ENCODE measurements at regions of chr1 and their contacts with region 1.

Region 1: GRCh38 chr1:68213843-68214242 is 18.5 kb downstream of the WLS start:
- DNase-seq: peak; percentile 93
- H3K4me3 ChIP-seq: no peak overlapping the region
- H3K27ac ChIP-seq: peak overlapping the region; percentile 72 to 83 (median 75)
- H3K4me1 ChIP-seq: peaks cover 59 to 100% (median 98%) of the 10 kb centered on the region in 4 donors
- H3K27me3 ChIP-seq: no peaks in the 10 kb centered on the region
- CTCF ChIP-seq: no peak
- EP300 ChIP-seq: no peak
- POLR2A ChIP-seq: no peak

Region 2: DNA sequence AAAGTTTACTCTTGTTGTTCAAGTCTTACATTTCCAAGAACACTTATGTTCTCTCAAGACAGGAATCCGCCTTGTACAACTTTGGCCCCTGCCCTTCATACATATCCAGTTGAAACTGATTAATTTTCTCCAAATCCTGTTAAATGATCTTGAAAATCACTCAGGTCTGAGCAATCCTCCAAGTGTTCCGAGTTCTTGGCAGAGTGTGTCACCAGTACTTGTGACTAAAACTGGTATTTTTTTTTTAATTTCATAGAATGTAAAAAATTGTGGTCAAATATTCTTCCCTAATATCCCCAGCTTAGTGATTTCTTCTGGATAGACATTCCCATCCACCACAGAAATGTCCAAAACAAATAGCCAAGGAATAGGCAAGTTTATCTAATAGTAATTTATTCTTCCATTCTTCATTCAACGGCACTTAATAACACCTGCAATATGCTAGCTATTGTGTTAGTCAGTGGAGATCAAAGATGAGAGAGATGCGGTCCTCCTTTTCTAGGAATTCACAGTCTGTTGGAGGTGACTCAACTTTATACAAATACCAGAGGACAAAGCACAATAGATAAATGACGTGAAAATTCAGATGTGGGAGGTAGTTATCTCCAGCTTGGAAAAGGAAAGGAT is 234.8 kb before region 1 on chr1:
- intact Hi-C with region 1: no loop called
- DNase-seq: no peak
- H3K4me3 ChIP-seq: no peak overlapping the region
- H3K27ac ChIP-seq: no peak overlapping the region
- H3K4me1 ChIP-seq: peaks cover 0 to 11% (median 3%) of the 10 kb centered on the region in 4 donors
- H3K27me3 ChIP-seq: no peaks in the 10 kb centered on the region
- CTCF ChIP-seq: no peak
- EP300 ChIP-seq: no peak
- POLR2A ChIP-seq: no peak

Region 3: DNA sequence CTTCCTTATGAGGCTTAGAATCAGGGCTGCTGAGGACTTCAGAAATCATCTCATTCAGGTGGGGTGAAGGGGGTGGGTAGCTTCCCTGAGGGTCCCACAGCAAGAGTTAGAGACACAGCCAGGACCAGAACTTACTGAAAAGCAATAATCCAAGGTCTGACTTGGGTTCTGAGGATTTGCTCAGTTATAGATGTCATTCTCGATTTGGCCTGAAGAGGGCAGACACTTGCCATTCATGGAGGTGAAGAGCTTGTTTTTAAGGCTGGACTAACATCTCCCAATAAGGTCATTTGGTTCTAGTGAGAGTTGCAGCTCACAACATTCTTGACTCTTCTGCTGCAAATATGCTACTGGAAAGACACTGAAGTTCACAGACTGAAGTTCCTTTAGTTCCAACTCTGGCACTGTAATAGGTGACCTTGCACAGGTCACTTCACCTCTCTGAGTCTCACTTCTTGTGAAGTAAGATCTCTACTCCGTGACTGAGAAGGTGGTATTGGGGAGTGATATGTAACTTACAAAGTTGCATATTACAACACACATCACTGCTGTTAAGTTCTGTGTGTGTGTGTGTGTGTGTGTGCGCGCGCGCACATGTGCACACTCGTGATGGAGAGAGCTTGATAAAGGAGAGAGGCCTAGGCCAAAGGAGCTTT is 93.6 kb before region 1 on chr1:
- intact Hi-C with region 1: no loop called
- DNase-seq: peak; percentile 93
- H3K4me3 ChIP-seq: no peak overlapping the region
- H3K27ac ChIP-seq: peak overlapping the region; percentile 70 to 73 (median 72)
- H3K4me1 ChIP-seq: peaks cover 4 to 42% (median 31%) of the 10 kb centered on the region in 4 donors
- H3K27me3 ChIP-seq: no peaks in the 10 kb centered on the region
- CTCF ChIP-seq: peak; percentile 82 to 84 (median 83)
- EP300 ChIP-seq: no peak
- POLR2A ChIP-seq: no peak

Region 4: GRCh38 chr1:68173911-68174737 is 39.7 kb before region 1 on chr1:
- intact Hi-C with region 1: loop called (anchors 5 kb)
- DNase-seq: no peak
- H3K4me3 ChIP-seq: peak overlapping the region; percentile 21 to 39 (median 27)
- H3K27ac ChIP-seq: peak overlapping the region; percentile 75 to 82 (median 78)
- H3K4me1 ChIP-seq: peaks cover 57 to 85% (median 81%) of the 10 kb centered on the region in 4 donors
- H3K27me3 ChIP-seq: no peaks in the 10 kb centered on the region
- CTCF ChIP-seq: no peak
- EP300 ChIP-seq: no peak
- POLR2A ChIP-seq: no peak

Region 5: DNA sequence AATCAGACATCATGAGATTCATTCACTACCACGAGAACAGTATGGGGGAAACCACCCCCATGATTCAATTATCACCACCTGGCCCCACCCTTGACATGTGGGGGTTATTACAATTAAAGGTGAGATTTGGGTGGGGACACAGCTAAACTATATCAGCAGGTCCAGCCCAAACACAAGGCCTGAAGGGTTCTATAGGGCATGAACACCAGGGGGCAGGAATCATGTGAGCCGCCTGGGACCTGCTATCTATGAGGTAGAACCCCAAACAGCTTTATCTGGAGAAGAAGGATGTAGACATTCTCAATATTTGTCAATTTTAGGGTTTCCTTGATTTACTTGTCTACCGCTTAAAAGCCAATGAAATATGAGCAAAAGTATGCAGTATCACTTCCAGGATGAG is 578.0 kb after region 1 on chr1:
- intact Hi-C with region 1: no loop called
- DNase-seq: no peak
- H3K4me3 ChIP-seq: no peak overlapping the region
- H3K27ac ChIP-seq: no peak overlapping the region
- H3K4me1 ChIP-seq: no peaks in the 10 kb centered on the region
- H3K27me3 ChIP-seq: no peaks in the 10 kb centered on the region
- CTCF ChIP-seq: no peak
- EP300 ChIP-seq: no peak
- POLR2A ChIP-seq: no peak

Measured in esophagus muscularis mucosa (tissue), 4 donors.